Activated CD8-positive, alpha-beta T cell treated with anti-CD3 and anti-CD28 coated beads for 36 hours (primary cell): ENCODE measurements at regions of chr18 and their contacts with region 1.

Region 1: GRCh38 chr18:80157708-80158343 is 48.8 kb downstream of the ADNP2 start:
- DNase-seq: peak; percentile 88
- ATAC-seq: peak; percentile 70
- H3K4me3 Mint-ChIP-seq: no peak overlapping the region
- H3K27ac Mint-ChIP-seq: no peak overlapping the region
- H3K4me1 Mint-ChIP-seq: peaks cover 5% of the 10 kb centered on the region
- H3K27me3 Mint-ChIP-seq: peaks cover 9% of the 10 kb centered on the region
- CTCF ChIP-seq: peak; percentile 98

Region 2: DNA sequence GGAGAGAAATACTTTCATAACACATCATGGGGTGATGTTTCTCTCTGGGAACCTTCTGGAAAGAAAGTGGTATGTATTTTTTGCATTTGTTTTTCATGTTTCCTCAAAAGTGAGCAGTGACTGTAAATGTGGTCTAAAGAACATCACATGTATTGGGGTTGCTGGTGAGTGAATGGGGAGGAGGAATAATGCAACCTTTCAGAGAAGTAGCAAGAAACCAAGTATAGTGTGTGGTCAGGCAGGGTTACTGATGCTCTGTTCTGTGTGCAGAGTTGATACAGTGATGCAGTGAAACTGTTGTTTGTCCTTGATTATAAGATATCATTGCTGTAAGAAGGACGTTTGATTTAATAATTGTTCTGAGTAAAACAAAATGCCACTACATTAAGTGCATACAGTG is 24.7 kb before region 1 on chr18:
- CTCF ChIA-PET with region 1: interaction called, 11 read pairs
- POLR2A ChIA-PET with region 1: no interaction called
- intact Hi-C with region 1: no loop called
- DNase-seq: no peak
- ATAC-seq: no peak
- H3K4me3 Mint-ChIP-seq: no peak overlapping the region
- H3K27ac Mint-ChIP-seq: no peak overlapping the region
- H3K4me1 Mint-ChIP-seq: peaks cover 34% of the 10 kb centered on the region
- H3K27me3 Mint-ChIP-seq: no peaks in the 10 kb centered on the region
- CTCF ChIP-seq: no peak

Region 3: DNA sequence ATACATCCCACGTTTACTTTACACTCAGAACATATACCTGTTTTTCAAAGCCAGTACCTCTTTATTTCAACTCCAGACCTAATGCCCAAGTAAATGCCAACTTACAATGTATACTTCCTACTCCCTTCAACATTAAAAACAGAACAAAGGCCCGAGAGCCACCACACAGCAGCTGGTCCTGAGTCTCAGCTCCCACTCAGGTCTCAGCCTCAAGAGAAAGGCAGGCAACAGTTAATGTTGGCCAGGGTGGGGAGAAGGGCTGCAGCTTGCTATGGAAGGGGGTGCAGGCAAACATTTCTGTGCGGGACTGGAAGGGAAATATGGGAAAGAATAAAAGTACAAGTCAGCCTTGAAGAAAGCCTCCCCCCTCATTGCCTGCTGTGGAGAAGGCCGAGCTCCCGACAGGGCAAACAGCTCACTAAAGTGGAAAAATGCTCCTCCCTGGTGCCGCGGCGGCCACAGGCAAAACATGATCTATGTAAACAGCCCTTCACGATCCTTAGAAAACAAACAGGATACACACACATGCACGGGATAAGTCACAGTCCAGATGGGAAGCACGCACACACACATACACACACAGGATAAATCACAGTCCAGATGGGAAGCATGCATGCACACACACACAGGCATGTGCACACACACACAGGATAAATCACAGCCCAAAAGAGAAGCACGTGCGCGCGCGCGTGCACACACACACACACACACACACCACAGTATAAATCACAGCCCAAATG is 18.7 kb after region 1 on chr18:
- CTCF ChIA-PET with region 1: interaction called, 61 read pairs
- POLR2A ChIA-PET with region 1: no interaction called
- intact Hi-C with region 1: no loop called
- DNase-seq: no peak
- ATAC-seq: no peak
- H3K4me3 Mint-ChIP-seq: no peak overlapping the region
- H3K27ac Mint-ChIP-seq: no peak overlapping the region
- H3K4me1 Mint-ChIP-seq: peaks cover 18% of the 10 kb centered on the region
- H3K27me3 Mint-ChIP-seq: peaks cover 11% of the 10 kb centered on the region
- CTCF ChIP-seq: no peak

Region 4: GRCh38 chr18:80200171-80200931 is 42.5 kb after region 1 on chr18:
- CTCF ChIA-PET with region 1: interaction called, 28 read pairs
- POLR2A ChIA-PET with region 1: no interaction called
- intact Hi-C with region 1: no loop called
- DNase-seq: no peak
- ATAC-seq: no peak
- H3K4me3 Mint-ChIP-seq: no peak overlapping the region
- H3K27ac Mint-ChIP-seq: no peak overlapping the region
- H3K4me1 Mint-ChIP-seq: peaks cover 16% of the 10 kb centered on the region
- H3K27me3 Mint-ChIP-seq: peaks cover 33% of the 10 kb centered on the region
- CTCF ChIP-seq: no peak

Region 5: DNA sequence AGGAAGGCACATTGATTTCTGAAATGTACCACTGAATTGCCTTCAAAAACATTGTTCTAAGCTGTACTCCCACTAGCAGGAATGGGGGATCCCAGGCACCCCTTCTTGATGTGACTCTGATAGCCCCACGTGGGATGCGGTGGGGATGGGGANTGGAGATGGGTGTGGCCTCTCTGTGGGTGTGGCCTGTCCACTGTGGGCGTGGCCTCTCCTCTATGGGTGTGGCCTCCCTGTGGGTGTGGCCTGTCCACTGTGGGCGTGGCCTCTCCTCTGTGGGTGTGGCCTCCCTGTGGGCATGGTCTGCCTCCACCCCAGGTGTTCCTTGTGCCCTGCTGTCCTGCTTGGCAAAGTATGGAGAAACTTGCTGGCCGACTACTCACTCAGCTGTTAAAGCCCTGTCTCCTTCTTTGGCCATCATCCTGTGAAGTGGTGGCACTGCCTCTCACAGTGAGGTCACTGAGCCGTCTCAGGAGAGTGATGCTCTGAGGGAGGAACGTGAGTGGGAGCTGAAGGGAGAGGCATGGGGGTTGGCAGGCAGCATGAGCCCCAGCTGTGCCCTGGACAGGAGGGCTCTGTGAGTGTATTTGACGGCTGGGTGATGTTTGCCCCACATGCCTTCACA is 96.2 kb after region 1 on chr18:
- CTCF ChIA-PET with region 1: interaction called, 54 read pairs
- POLR2A ChIA-PET with region 1: interaction called, 4 read pairs
- intact Hi-C with region 1: no loop called
- DNase-seq: peak; percentile 35
- ATAC-seq: peak; percentile 90
- H3K4me3 Mint-ChIP-seq: no peak overlapping the region
- H3K27ac Mint-ChIP-seq: no peak overlapping the region
- H3K4me1 Mint-ChIP-seq: no peaks in the 10 kb centered on the region
- H3K27me3 Mint-ChIP-seq: peaks cover 7% of the 10 kb centered on the region
- CTCF ChIP-seq: no peak